ENCODE measurements at regions of chr9 and their contacts with region 1.

Region 1: DNA sequence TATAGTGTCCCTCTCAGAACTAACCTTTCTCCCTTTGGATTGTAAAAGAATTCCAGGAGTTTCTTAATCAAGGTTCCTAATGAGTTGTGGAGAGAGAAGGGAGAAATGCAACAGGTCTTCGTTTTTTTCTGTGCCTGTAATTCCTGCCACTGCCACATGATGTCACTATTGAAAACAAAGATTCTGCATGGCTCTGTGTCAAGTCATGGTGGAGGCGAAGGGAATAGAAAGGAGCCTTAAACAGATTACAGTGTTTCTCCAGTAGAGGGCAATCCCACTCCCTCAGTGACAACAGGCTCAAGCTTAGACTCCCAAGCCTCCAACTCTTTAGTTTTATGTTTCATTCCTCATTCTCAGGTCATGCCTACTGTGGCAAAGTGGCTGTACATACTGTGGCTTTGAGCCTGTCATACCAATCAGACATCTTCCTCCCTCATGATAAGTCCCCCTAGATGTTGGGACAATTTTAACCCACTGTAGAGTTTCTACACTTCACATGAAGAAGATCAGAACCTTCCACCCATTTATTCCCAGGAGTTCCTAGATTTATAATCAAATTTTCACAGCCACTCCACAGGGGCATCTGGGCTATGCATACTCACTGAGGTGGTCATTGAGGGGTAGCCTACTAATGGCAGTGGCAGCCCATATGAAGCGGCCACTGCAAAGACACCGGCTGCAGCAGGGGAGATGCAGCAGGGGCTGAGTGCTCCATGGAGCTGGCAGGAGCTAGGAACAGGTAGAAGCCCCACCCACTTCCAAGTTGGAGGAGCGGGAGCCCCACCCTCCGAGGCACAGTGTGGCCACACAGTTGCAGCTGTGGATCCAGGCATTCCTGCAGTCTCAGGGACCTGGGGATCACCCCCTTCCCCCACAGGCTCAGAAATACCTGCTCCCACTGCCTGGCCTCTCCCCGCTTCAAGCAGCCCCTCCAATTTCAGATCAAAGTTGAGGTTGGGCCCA is 97.4 kb upstream of the TRIM32 start:
- DNase-seq: peak; percentile 50 to 80
- H3K4me3 ChIP-seq: no peak overlapping the region
- H3K27ac ChIP-seq: no peak overlapping the region
- H3K4me1 ChIP-seq: peaks cover 0 to 3% (median 1%) of the 10 kb centered on the region in 4 experiments; a peak in 1 of 7 replicates
- H3K27me3 ChIP-seq: no peaks in the 10 kb centered on the region
- CTCF ChIP-seq: peak in 2 of 3 experiments; percentile 97 to 98; a peak in 3 of 4 replicates
- EP300 ChIP-seq: 0 out of 3 replicates have a peak, but pooled peaks of 1 of the 2 experiments have one; percentile 39
- POLR2A ChIP-seq: no peak
- RAD21 ChIP-seq: peak; percentile 79 to 80

Region 2: GRCh38 chr9:116572095-116572748 is 17.5 kb before region 1 on chr9:
- CTCF ChIA-PET with region 1: interaction called, 22 read pairs
- POLR2A ChIA-PET with region 1: interaction called, 3 read pairs
- DNase-seq: peak; percentile 46 to 91
- H3K4me3 ChIP-seq: no peak overlapping the region
- H3K27ac ChIP-seq: no peak overlapping the region
- H3K4me1 ChIP-seq: peaks cover 0 to 3% (median under 1%) of the 10 kb centered on the region in 4 experiments; a peak in 3 of 7 replicates
- H3K27me3 ChIP-seq: no peaks in the 10 kb centered on the region
- CTCF ChIP-seq: peak; percentile 92 to 96 (median 95)
- EP300 ChIP-seq: no peak
- POLR2A ChIP-seq: no peak
- RAD21 ChIP-seq: peak; percentile 99 to 100

Region 3: DNA sequence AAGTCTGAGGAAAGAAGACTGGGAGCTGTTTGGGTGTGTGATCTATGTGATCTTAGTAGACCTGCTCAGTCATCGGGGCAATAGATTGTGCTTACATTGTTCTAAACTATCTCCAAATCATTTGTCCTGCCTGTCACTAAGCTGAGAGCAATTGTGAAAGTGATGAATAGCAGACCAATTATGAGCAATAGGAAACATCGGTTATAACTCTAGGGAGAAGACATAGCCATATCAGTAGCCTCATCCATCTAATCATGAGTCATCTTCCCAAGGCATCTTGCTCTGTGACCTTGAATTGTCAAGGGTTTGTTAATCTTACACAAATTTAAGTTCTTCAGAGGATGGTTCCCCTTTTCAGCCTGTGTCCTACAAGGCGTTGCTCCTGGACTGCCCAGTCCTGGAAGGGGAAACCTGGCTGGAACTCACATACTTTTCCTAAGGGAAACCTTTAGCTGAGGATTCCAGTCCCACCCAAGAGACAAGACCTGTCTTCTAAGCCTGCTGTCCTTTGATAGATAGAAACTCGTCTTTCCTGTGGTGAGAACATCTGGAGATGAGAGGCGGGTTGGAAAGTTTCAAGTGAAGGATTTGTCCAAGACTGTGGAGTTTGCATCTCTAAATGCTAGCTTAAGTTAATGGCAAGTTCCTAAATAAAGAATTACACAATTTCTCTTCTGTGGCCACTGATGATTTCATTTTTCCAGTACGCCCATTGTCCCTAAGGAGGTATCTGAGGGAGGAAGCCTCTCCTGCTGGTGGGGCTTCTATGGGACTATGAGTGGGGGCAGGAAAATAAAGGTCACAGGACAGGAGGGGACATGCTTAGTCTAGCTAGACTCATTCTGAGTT is 43.5 kb after region 1 on chr9:
- CTCF ChIA-PET with region 1: interaction called, 17 read pairs
- POLR2A ChIA-PET with region 1: no interaction called
- DNase-seq: no peak
- H3K4me3 ChIP-seq: no peak overlapping the region
- H3K27ac ChIP-seq: no peak overlapping the region
- H3K4me1 ChIP-seq: no peaks in the 10 kb centered on the region
- H3K27me3 ChIP-seq: no peaks in the 10 kb centered on the region
- CTCF ChIP-seq: no peak
- EP300 ChIP-seq: no peak
- POLR2A ChIP-seq: no peak
- RAD21 ChIP-seq: no peak

Region 4: DNA sequence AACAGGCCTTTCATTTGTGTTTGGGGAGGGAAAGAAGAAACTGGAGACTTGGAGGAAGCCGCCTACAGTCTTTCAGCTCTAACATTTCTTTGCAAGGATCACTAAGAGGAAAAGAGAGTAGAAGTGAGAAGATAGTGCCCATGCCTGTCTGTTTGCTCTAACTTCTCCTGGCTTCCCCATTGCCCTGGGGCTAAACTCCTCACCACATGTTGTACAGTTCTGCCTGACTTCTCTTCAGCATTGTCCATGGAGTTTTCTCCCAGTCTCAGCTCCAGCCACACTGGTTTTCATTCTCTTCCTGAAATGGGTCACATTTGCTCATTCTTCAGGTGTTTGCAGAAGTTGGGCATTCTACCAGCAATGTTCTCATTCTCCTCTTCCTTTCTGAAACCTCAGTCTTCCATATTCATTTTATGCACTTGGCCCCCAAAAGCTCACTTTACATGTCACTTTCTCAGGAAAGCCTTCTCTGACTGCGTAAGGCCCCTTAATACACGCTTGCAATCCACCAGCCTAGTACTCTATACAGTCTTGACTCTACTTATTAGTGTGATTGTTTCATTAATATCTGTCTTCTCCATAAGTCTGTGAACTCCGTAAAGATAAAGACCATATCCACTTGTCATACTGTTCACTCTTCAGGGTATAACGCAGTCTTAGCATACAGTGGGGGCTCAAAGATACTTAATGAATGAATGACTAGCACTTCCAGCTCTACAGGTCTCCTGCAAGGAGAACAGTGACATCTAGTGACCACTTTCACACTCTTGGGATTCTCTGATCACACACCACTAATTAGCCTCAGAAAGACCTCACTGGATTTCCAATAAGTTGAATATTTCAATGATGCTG is 57.2 kb after region 1 on chr9:
- CTCF ChIA-PET with region 1: interaction called, 66 read pairs
- POLR2A ChIA-PET with region 1: no interaction called
- DNase-seq: no peak
- H3K4me3 ChIP-seq: no peak overlapping the region
- H3K27ac ChIP-seq: no peak overlapping the region
- H3K4me1 ChIP-seq: no peaks in the 10 kb centered on the region
- H3K27me3 ChIP-seq: no peaks in the 10 kb centered on the region
- CTCF ChIP-seq: peak in 2 of 3 experiments; percentile 63 to 71; a peak in 3 of 4 replicates
- EP300 ChIP-seq: no peak
- POLR2A ChIP-seq: no peak
- RAD21 ChIP-seq: peak; percentile 79 to 81

Region 5: DNA sequence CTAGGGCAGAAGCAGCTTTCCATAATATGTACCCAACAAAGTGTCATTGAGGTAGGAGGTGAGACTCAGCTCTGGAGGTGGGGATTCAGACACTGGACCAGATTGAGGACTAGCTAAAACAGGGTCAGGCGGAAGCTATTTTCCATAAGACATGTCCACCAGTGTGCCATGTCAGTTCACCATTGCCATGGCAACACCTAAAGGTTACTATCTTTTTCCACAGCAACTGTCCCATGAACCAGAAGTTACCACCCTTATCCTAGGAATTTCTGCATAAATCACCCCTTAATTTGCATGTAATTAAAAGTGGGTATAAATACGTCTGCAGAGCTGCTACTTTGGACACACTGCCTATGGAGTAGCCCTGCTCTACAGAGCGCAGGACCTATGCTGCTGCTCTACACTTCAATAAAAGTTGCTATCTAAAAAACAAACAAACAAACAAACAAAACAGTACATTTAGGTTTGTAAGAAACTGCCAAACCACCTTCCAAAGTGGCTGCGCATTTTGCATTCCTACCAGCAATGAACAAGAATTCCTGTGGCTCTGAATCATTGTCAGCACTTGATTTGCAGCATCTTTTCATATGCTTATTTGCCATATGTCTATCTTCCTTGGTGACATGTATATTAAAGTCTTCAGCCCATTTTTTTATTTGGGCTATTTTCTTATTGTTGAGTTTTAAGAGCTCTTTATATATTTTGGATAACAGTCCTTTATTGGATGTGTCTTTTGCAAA is 79.5 kb after region 1 on chr9:
- CTCF ChIA-PET with region 1: interaction called, 16 read pairs
- POLR2A ChIA-PET with region 1: no interaction called
- DNase-seq: no peak
- H3K4me3 ChIP-seq: no peak overlapping the region
- H3K27ac ChIP-seq: no peak overlapping the region
- H3K4me1 ChIP-seq: no peaks in the 10 kb centered on the region
- H3K27me3 ChIP-seq: no peaks in the 10 kb centered on the region
- CTCF ChIP-seq: no peak
- EP300 ChIP-seq: no peak
- POLR2A ChIP-seq: no peak
- RAD21 ChIP-seq: no peak

Measured in H1 (cell line).